ENCODE measurements at regions of chr1 and their contacts with region 1.

Region 1: GRCh38 chr1:116232989-116233514 is 121.9 kb downstream of the MAB21L3 start:
- DNase-seq: peak; percentile 34 to 51 (median 44)
- H3K4me3 ChIP-seq: no peak overlapping the region
- H3K4me3 Mint-ChIP-seq: no peak overlapping the region
- H3K27ac ChIP-seq: no peak overlapping the region
- H3K27ac Mint-ChIP-seq: peak overlapping the region in 4 of 7 donors; percentile 47 to 83 (median 68)
- H3K4me1 ChIP-seq: peaks cover 10% of the 10 kb centered on the region
- H3K4me1 Mint-ChIP-seq: peaks cover 15 to 23% (median 20%) of the 10 kb centered on the region in 4 donors
- H3K27me3 ChIP-seq: no peaks in the 10 kb centered on the region
- H3K27me3 Mint-ChIP-seq: no peaks in the 10 kb centered on the region

Region 2: DNA sequence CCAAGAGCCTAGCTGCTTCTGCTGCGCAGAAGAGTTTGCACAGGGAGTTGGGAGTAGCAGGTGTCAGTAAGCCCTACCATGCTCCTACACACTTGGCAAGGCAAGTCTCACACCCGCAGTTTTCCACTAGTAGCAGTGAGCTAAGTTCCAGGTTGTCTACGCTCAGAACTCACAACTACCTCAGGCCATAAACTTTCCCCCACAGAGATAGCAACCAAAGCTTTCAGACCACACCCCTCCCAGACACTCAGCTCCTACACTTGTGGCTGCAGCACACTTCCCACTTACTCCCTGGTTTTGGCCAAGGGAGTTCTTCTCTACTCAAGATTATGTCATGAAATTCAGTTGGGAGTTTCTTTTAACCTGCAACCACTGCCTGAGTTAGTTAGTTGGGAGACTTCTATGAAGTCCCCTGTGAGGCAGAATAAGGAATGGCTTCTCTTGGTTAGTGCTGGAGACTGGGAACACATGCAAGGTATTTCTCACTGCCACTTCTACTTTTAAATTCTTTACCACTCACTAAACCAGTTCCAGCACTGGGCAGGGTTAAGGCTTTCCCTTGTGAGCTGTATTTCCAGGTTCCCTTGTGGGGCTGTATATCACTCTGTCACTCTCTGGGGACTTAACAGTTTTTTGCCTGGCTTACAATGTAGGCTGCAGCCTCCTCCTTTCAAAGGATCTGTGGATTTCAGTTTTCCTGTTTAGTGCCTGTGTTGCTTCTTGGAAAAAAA is 140.1 kb before region 1 on chr1:
- CTCF ChIA-PET with region 1: no interaction called
- POLR2A ChIA-PET with region 1: no interaction called
- intact Hi-C with region 1: no loop called
- DNase-seq: no peak
- H3K4me3 ChIP-seq: no peak overlapping the region
- H3K4me3 Mint-ChIP-seq: no peak overlapping the region
- H3K27ac ChIP-seq: no peak overlapping the region
- H3K27ac Mint-ChIP-seq: no peak overlapping the region
- H3K4me1 ChIP-seq: no peaks in the 10 kb centered on the region
- H3K4me1 Mint-ChIP-seq: peaks cover 0 to 1% (median 0%) of the 10 kb centered on the region in 4 donors
- H3K27me3 ChIP-seq: no peaks in the 10 kb centered on the region
- H3K27me3 Mint-ChIP-seq: peaks cover 20 to 22% of the 10 kb centered on the region in 2 donors

Region 3: GRCh38 chr1:116151739-116152576 is 81.1 kb before region 1 on chr1:
- CTCF ChIA-PET with region 1: interaction called, 5 read pairs
- POLR2A ChIA-PET with region 1: no interaction called
- intact Hi-C with region 1: loop called (anchors 5 kb)
- DNase-seq: peak; percentile 72 to 81 (median 76)
- H3K4me3 ChIP-seq: peak overlapping the region; percentile 23 to 28
- H3K4me3 Mint-ChIP-seq: peak overlapping the region; percentile 46 to 87 (median 80)
- H3K27ac ChIP-seq: peak overlapping the region; percentile 17
- H3K27ac Mint-ChIP-seq: peak overlapping the region; percentile 81 to 93 (median 88)
- H3K4me1 ChIP-seq: peaks cover 17% of the 10 kb centered on the region
- H3K4me1 Mint-ChIP-seq: peaks cover 10 to 23% (median 15%) of the 10 kb centered on the region in 4 donors
- H3K27me3 ChIP-seq: no peaks in the 10 kb centered on the region
- H3K27me3 Mint-ChIP-seq: peaks cover 0 to 3% of the 10 kb centered on the region in 2 donors

Region 4: GRCh38 chr1:116325922-116326321 is 92.9 kb after region 1 on chr1:
- CTCF ChIA-PET with region 1: interaction called, 6 read pairs
- POLR2A ChIA-PET with region 1: interaction called, 3 read pairs
- intact Hi-C with region 1: loop called (anchors 5 kb)
- DNase-seq: peak; percentile 56 to 72 (median 68)
- H3K4me3 ChIP-seq: peak overlapping the region in 1 of 2 donors; percentile 19
- H3K4me3 Mint-ChIP-seq: peak overlapping the region; percentile 53 to 83 (median 74)
- H3K27ac ChIP-seq: peak overlapping the region; percentile 60
- H3K27ac Mint-ChIP-seq: peak overlapping the region; percentile 74 to 98 (median 90)
- H3K4me1 ChIP-seq: peaks cover 79% of the 10 kb centered on the region
- H3K4me1 Mint-ChIP-seq: peaks cover 56 to 91% (median 78%) of the 10 kb centered on the region in 4 donors
- H3K27me3 ChIP-seq: no peaks in the 10 kb centered on the region
- H3K27me3 Mint-ChIP-seq: no peaks in the 10 kb centered on the region

Region 5: DNA sequence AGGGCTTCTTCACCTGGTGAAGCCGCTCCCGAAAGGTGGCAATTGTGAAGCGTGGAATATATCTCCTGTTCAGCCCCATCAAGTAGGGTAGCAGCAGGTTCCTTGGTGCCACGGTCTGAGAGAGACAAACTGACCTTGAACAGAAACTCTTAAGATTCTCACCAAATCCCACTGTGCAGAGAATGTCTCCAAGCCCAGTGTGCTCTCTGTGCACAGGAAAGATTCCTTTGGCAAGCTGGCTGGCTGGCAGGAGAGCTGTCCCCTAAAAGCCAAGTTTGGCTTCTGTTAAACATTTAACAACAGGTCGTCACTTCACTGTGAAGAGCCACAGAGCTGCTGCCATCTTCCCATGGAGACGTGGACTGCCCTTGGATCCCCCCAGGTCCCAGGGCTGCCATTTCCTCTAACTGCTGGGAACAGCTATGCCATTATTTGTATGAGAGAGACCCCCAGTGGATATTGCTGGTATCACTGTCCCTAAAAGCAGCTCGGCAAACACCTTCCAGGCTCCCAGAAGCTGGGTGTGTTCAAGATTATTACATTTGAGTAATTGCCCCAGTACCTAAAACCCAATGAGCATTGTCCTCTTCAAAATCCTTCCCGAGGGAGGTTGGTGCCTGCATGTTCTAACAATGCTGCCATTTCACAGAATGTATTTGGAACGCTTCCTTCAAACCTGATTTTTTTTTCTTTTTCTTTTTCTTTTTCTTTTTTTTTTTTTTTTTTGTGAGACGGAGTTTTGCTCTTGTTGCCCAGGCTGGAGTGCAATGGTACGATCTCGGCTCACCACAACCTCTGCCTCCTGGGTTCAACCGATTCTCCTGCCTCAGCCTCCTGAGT is 266.0 kb after region 1 on chr1:
- CTCF ChIA-PET with region 1: interaction called, 9 read pairs
- POLR2A ChIA-PET with region 1: no interaction called
- intact Hi-C with region 1: loop called (anchors 1 kb)
- DNase-seq: peak; percentile 38 to 59 (median 54)
- H3K4me3 ChIP-seq: no peak overlapping the region
- H3K4me3 Mint-ChIP-seq: peak overlapping the region in 1 of 8 donors; percentile 27
- H3K27ac ChIP-seq: no peak overlapping the region
- H3K27ac Mint-ChIP-seq: peak overlapping the region in 6 of 7 donors; percentile 42 to 90 (median 74)
- H3K4me1 ChIP-seq: peaks cover 31% of the 10 kb centered on the region
- H3K4me1 Mint-ChIP-seq: peaks cover 26 to 60% (median 35%) of the 10 kb centered on the region in 4 donors
- H3K27me3 ChIP-seq: no peaks in the 10 kb centered on the region
- H3K27me3 Mint-ChIP-seq: no peaks in the 10 kb centered on the region

Measured in CD4-positive, alpha-beta memory T cell (primary cell).